HEK293 (cell line): ENCODE measurements at regions of chr22 and their contacts with region 1.

Region 1: DNA sequence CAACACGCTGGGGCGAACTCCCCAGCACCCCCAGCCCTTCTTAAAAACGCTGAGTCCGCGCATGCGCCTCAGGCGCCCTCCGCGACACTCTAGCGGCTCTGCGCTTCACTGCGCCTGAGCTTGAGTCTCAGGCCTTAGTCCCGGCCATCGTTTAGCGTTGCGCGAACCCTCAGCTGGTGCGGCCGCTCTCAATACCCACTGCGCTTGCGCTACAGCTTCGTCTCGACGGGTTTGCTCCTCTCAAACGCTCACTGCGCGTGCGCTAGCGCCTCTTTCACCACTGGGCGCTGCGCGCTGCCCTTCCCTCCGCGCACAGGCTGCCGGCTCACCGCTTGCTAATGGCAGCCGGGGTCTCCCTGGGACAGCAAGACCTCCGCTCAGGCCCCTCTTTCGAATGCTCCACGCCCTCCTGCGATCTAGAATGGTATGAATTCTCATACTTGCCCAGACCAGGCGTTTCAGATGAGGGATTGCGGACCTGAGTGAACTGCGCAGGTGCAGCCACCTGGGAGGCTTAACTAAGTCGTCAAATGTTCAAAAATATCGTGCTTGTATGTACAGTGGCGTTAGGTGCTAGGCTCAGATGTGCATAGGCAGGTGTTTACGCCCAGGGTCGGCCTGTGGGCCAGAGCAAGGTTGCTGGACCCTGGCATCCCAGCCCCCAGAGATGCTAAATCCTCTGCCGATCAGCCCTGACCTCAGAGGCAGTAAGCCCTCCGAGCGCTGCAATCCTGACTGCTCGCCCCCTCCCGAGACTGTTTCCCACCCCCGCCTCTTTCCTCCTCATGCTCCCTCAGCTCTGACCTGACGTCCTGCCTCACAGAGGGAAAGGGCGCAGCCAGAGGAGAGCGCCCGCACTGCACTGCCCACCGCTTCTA is at the start of gene SLC2A11:
- H3K4me3 ChIP-seq: peak within 1 kb of the TSS; percentile 64
- H3K27ac ChIP-seq: peak within 1 kb of the TSS; percentile 87
- H3K4me1 ChIP-seq: peaks cover 7% of the 10 kb centered on the region; the same call in 1 of the 2 replicates
- CTCF ChIP-seq: peak; percentile 45; the same call in 1 of the 2 replicates

Region 2: GRCh38 chr22:23767673-23768548 is 89.9 kb before region 1 on chr22 and contains the start of gene CHCHD10:
- CTCF ChIA-PET with region 1: interaction called, 6 read pairs
- POLR2A ChIA-PET with region 1: interaction called, 18 read pairs
- H3K4me3 ChIP-seq: peak within 1 kb of the TSS; percentile 68
- H3K27ac ChIP-seq: peak within 1 kb of the TSS; percentile 50
- H3K4me1 ChIP-seq: peaks cover 3% of the 10 kb centered on the region
- CTCF ChIP-seq: peak; percentile 93

Region 3: GRCh38 chr22:23774743-23775566 is 82.9 kb before region 1 on chr22:
- CTCF ChIA-PET with region 1: interaction called, 6 read pairs
- POLR2A ChIA-PET with region 1: interaction called, 18 read pairs
- H3K4me3 ChIP-seq: no peak overlapping the region
- H3K27ac ChIP-seq: no peak overlapping the region
- H3K4me1 ChIP-seq: peaks cover 3% of the 10 kb centered on the region
- CTCF ChIP-seq: no peak

Region 4: DNA sequence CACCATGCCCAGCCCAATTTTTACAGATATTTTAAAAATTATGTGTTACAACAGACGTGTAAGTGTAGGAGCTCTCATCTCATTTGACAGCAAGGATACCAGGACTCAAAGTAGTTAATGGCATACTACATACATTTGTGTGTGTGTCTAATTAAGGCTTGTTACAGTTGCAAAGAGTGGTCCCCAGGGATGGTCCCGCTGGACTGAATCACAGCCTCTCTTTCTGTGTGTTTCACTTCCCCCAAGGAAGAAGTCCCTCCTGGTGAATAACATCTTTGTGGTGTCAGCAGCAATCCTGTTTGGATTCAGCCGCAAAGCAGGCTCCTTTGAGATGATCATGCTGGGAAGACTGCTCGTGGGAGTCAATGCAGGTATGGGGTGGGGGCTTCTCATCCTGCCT is 17.0 kb after region 1 on chr22:
- CTCF ChIA-PET with region 1: interaction called, 26 read pairs
- POLR2A ChIA-PET with region 1: interaction called, 11 read pairs
- H3K4me3 ChIP-seq: no peak overlapping the region
- H3K27ac ChIP-seq: no peak overlapping the region
- H3K4me1 ChIP-seq: no peaks in the 10 kb centered on the region
- CTCF ChIP-seq: no peak

Region 5: GRCh38 chr22:23888615-23889401 is 31.0 kb after region 1 on chr22:
- CTCF ChIA-PET with region 1: interaction called, 9 read pairs
- POLR2A ChIA-PET with region 1: interaction called, 61 read pairs
- H3K4me3 ChIP-seq: no peak overlapping the region
- H3K27ac ChIP-seq: no peak overlapping the region
- H3K4me1 ChIP-seq: peaks cover 4% of the 10 kb centered on the region; the same call in 1 of the 2 replicates
- CTCF ChIP-seq: peak; percentile 78

Region 6: GRCh38 chr22:23913661-23914353 is 56.0 kb after region 1 on chr22:
- CTCF ChIA-PET with region 1: no interaction called
- POLR2A ChIA-PET with region 1: interaction called, 29 read pairs
- H3K4me3 ChIP-seq: peak overlapping the region; percentile 63
- H3K27ac ChIP-seq: peak overlapping the region; percentile 94
- H3K4me1 ChIP-seq: peaks cover 4% of the 10 kb centered on the region; the same call in 1 of the 2 replicates
- CTCF ChIP-seq: 0 out of 2 replicates have a peak, but pooled peaks have one; percentile 42